ENCODE measurements at regions of chr4 and their contacts with region 1.

Region 1: GRCh38 chr4:186725469-186726425 is 2.1 kb upstream of the FAT1 start:
- DNase-seq: peak in 1 of 2 donors; percentile 86
- H3K4me3 ChIP-seq: peak overlapping the region; percentile 76 to 84
- H3K27ac ChIP-seq: peak overlapping the region; percentile 95 to 96
- H3K4me1 ChIP-seq: no peaks in the 10 kb centered on the region
- H3K27me3 ChIP-seq: no peaks in the 10 kb centered on the region
- CTCF ChIP-seq: peak; percentile 19 to 73 (median 60)

Region 2: GRCh38 chr4:186621959-186622553 is 103.7 kb before region 1 on chr4:
- intact Hi-C with region 1: loop called (anchors 2 kb)
- DNase-seq: no peak
- H3K4me3 ChIP-seq: no peak overlapping the region
- H3K27ac ChIP-seq: peak overlapping the region; percentile 71 to 76
- H3K4me1 ChIP-seq: peaks cover 7 to 39% of the 10 kb centered on the region in 2 donors
- H3K27me3 ChIP-seq: no peaks in the 10 kb centered on the region
- CTCF ChIP-seq: peak; percentile 22 to 53 (median 45)

Region 3: GRCh38 chr4:186693159-186693815 is 32.5 kb before region 1 on chr4:
- intact Hi-C with region 1: loop called (anchors 5 kb)
- DNase-seq: peak; percentile 50 to 92
- H3K4me3 ChIP-seq: no peak overlapping the region
- H3K27ac ChIP-seq: peak overlapping the region; percentile 54 to 75
- H3K4me1 ChIP-seq: peaks cover 0 to 25% of the 10 kb centered on the region in 2 donors
- H3K27me3 ChIP-seq: no peaks in the 10 kb centered on the region
- CTCF ChIP-seq: no peak

Region 4: DNA sequence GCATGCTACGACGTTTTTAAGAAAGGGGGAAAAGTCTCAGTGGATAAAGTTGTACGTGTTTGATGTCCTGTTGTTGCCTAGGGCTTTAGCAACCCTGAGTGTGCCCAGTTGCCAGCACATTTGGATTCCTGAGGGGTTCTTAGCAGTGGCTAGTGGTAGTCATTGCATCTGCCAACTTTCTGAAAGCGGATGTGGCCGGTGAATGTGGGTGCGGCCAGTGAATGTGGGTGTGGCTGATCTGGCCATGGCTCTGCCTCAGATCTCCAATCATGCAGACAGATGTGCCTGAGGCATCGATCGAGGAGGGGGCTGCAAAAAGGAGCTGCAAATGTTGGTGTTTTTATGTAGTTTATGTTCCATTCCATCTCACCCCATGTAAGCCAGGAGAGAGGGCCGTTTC is 39.4 kb after region 1 on chr4:
- intact Hi-C with region 1: no loop called
- DNase-seq: no peak
- H3K4me3 ChIP-seq: no peak overlapping the region
- H3K27ac ChIP-seq: no peak overlapping the region
- H3K4me1 ChIP-seq: no peaks in the 10 kb centered on the region
- H3K27me3 ChIP-seq: no peaks in the 10 kb centered on the region
- CTCF ChIP-seq: no peak

Region 5: DNA sequence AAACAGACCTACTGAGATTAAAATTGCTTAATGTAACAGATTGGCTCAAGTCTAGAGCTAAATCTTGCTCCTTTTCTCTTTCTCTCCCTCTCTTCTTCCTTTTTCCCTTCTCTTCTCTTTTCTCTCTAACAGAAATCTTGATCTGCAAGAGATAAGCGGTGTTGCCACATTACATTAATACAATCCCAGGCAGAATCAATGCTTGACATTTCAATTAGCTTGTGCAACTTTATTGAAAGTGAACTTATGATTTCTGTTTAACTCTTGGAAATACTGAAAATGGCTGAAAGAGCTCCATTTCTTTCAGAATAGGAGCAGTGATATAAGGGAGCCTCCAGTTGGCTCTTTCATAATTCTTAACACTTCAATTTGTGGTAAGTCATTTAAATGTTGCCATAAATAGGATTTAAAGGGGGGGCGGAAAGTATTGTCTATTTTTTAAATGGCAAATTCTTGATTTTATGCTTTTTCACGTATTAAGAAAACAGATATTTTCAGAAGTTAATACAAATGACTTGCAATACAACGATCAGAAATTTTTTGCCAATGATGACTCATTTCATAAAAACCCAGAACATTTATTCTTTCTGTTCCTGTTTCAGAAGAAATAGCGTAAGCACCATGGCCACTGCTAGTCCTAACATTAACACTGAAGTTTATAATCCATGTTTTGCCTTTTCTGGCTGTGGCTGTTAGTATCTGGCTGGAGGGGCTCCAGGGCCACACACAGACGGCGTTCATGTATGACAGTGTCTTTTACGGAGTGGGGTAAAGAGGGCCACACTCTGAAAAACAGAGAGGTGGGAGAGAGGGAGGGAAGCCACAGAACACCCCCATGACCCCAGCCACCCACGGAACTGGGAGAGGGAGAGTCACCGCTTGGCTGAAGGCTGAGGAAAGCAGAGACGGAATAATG is 113.6 kb after region 1 on chr4:
- intact Hi-C with region 1: loop called (anchors 2 kb)
- DNase-seq: peak in 1 of 2 donors; percentile 67
- H3K4me3 ChIP-seq: peak overlapping the region in 1 of 2 donors; percentile 56
- H3K27ac ChIP-seq: peak overlapping the region; percentile 87 to 89
- H3K4me1 ChIP-seq: peaks cover 0 to 3% of the 10 kb centered on the region in 2 donors
- H3K27me3 ChIP-seq: no peaks in the 10 kb centered on the region
- CTCF ChIP-seq: no peak

Region 6: DNA sequence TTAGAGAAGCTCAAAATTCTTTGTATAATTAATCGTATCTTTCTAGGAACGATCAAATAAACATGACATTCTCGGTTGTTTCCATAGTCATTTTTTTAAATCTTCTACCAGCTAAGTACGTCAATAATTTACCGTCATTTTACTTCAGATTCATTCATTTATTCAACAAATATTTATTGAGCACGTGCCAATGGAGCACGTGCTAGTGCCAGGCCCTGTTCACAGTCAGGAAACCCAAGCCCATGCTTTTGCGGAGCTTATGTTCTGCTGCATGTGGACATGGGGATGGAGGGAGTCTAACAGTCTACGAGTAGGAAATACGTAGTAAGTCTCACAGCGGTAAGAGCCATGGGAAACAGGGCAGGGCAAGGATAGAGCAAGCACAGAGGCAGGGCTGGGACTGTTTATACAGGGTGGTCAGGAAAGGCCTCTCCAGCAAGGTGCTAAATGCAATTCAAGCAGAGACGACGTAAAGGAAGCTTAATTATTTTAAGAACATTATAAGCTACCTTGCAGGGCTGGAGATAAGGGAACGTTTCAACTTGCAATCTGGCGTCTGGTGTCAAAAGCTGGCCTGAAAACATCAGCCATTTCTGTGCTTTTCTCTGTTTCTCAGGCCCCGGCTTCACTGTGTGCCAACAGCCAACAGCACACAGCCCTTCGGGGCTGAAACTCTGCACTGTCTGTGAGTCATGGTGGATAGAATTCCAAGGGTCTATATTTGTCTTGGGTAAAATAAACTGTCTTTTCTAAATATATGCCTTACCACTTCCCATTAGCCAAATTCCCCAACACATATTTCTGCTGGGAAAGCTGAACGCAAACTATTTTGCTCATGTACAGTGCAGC is 752.8 kb after region 1 on chr4:
- intact Hi-C with region 1: loop called (anchors 2 kb)
- DNase-seq: peak in 1 of 2 donors; percentile 74
- H3K4me3 ChIP-seq: peak overlapping the region in 1 of 2 donors; percentile 23
- H3K27ac ChIP-seq: peak overlapping the region; percentile 60 to 81
- H3K4me1 ChIP-seq: peaks cover 15 to 42% of the 10 kb centered on the region in 2 donors
- H3K27me3 ChIP-seq: no peaks in the 10 kb centered on the region
- CTCF ChIP-seq: no peak

Region 7: GRCh38 chr4:188196134-188196735 is 1470.5 kb after region 1 on chr4:
- intact Hi-C with region 1: loop called (anchors 10 kb)
- DNase-seq: no peak
- H3K4me3 ChIP-seq: peak overlapping the region in 1 of 2 donors; percentile 39
- H3K27ac ChIP-seq: no peak overlapping the region
- H3K4me1 ChIP-seq: peaks cover 0 to 5% of the 10 kb centered on the region in 2 donors
- H3K27me3 ChIP-seq: no peaks in the 10 kb centered on the region
- CTCF ChIP-seq: no peak

Region 8: DNA sequence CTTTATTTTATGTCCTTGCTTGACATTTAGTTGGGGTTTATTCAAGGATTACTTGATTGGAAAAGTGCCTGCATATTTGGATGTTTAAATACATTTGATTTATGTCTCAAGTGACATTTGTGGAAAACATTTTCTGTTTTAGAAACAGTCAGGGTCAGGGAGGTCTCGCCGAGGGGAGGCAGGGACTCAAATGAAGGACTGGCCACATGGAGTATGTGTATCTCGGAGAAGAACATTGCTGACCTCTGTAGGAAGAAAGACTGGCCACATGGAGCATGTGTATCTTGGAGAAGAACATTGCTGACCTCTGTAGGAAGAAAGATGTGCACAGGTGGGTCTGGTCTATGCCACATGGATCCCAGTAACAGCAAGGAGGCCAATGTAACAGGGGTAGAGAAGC is 1647.1 kb after region 1 on chr4:
- intact Hi-C with region 1: loop called (anchors 2 kb)
- DNase-seq: peak in 1 of 2 donors; percentile 70
- H3K4me3 ChIP-seq: no peak overlapping the region
- H3K27ac ChIP-seq: no peak overlapping the region
- H3K4me1 ChIP-seq: no peaks in the 10 kb centered on the region
- H3K27me3 ChIP-seq: no peaks in the 10 kb centered on the region
- CTCF ChIP-seq: peak in 2 of 3 experiments; percentile 43 to 52

Measured in ascending aorta (tissue), 2 donors.